ENCODE measurements at regions of chr17 and their contacts with region 1.

Region 1: DNA sequence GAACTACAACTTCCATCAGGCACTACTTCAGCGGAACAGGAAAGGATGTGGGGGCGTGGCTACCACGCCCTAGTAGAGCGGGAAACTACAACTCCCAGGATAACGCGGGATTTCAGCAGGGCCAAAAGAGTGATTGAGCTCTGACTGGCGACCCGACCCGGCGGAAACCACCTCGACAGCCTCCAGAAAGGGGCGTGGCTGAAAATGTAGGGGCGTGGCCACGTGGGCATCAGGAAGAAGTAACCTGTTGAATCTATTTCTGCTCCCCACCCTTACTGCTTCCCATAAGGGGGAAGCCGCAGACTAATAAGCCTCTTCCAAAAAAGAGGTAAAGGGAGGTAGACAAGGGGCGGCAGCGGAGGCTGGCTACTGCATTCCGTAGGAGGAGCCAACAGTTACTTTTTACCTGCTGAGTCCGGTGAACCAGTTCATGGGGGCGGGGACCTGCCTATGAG is at the start of gene TMEM102:
- DNase-seq: peak; percentile 92 to 99 (median 99)
- ATAC-seq: peak; percentile 94
- H3K4me3 ChIP-seq: peak within 1 kb of the TSS; percentile 65
- H3K4me3 Mint-ChIP-seq: peak within 1 kb of the TSS; percentile 86 to 96 (median 94)
- H3K27ac ChIP-seq: peak within 1 kb of the TSS; percentile 83
- H3K27ac Mint-ChIP-seq: peak within 1 kb of the TSS; percentile 89 to 97 (median 95)
- H3K4me1 ChIP-seq: peaks cover 16 to 38% of the 10 kb centered on the region in 2 donors
- H3K4me1 Mint-ChIP-seq: peaks cover 26 to 42% (median 36%) of the 10 kb centered on the region in 7 donors
- H3K27me3 ChIP-seq: peaks cover 0 to 9% of the 10 kb centered on the region in 2 donors
- H3K27me3 Mint-ChIP-seq: peaks cover 11 to 13% (median 12%) of the 10 kb centered on the region in 5 donors
- total RNA-seq, gene TMEM102: 8.2 to 19.1 (median 16.5) TPM

Region 2: GRCh38 chr17:7239091-7240027 is 195.9 kb before region 1 on chr17 and contains the start of gene PHF23:
- CTCF ChIA-PET with region 1: no interaction called
- POLR2A ChIA-PET with region 1: interaction called, 3 read pairs
- intact Hi-C with region 1: loop called (anchors 1 kb)
- DNase-seq: peak; percentile 91 to 98 (median 97)
- ATAC-seq: peak; percentile 78
- H3K4me3 ChIP-seq: peak within 1 kb of the TSS; percentile 76
- H3K4me3 Mint-ChIP-seq: peak within 1 kb of the TSS; percentile 88 to 98 (median 95)
- H3K27ac ChIP-seq: peak within 1 kb of the TSS; percentile 92
- H3K27ac Mint-ChIP-seq: peak within 1 kb of the TSS; percentile 55 to 100 (median 95)
- H3K4me1 ChIP-seq: peaks cover 32 to 44% of the 10 kb centered on the region in 2 donors
- H3K4me1 Mint-ChIP-seq: peaks cover 38 to 67% (median 60%) of the 10 kb centered on the region in 7 donors
- H3K27me3 ChIP-seq: no peaks in the 10 kb centered on the region
- H3K27me3 Mint-ChIP-seq: peaks cover 0 to 7% (median 0%) of the 10 kb centered on the region in 5 donors
- total RNA-seq, gene PHF23: 12.3 to 58.7 (median 55.2) TPM

Region 3: DNA sequence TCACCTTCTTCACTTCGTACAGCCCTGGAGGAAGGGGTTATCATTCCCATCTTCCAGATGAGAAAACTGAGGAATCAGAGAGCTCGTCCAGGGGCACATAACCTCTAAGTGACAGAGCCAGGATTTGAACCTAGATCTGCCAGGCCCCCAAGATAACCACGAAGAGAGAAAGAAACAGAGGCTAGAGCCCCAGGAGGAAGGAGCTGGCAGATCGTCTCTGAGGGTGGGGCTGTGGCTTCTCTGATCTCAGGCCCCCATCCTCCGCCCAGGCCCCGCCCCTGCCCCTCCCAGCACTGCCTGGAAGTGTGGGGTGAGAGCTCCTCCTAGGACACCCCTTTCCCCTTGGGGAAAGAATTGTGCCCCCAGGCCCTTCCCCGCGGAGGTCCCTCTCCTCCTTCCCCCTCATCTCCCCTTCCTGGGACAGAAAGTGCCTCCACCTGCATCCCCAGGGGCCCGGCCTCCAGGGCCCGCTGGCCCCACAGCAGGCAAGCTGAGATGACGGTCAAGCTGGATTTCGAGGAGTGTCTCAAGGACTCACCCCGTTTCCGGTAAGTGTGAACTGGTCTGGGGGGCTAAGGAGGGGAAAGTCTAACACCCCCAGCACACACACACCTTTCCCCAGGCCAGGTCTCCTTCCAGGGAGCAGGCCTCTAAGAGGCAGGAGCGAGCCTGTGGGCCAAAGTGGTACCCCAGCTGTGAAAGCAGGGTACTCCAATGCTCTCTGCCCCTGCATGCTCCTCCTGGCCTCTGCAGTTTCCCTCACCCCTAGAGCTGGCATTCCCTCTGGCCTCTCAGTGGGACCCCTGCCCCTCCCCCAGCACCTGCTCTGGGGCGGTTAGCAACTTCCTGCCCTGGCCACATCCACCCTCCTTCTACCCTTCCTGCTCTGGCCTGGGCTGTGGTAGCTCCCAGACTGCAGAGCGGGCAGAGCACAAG is 98.7 kb before region 1 on chr17 and contains the start of gene ACAP1:
- CTCF ChIA-PET with region 1: interaction called, 16 read pairs
- POLR2A ChIA-PET with region 1: interaction called, 20 read pairs
- intact Hi-C with region 1: loop called in 1 of 2 experiments (anchors 1 kb)
- DNase-seq: peak; percentile 56 to 85 (median 82)
- ATAC-seq: peak; percentile 99
- H3K4me3 ChIP-seq: peak within 1 kb of the TSS; percentile 99
- H3K4me3 Mint-ChIP-seq: peak within 1 kb of the TSS; percentile 89 to 99 (median 94)
- H3K27ac ChIP-seq: peak within 1 kb of the TSS; percentile 81
- H3K27ac Mint-ChIP-seq: peak within 1 kb of the TSS; percentile 89 to 100 (median 95)
- H3K4me1 ChIP-seq: peaks cover 31 to 44% of the 10 kb centered on the region in 2 donors
- H3K4me1 Mint-ChIP-seq: peaks cover 49 to 76% (median 60%) of the 10 kb centered on the region in 7 donors
- H3K27me3 ChIP-seq: no peaks in the 10 kb centered on the region
- H3K27me3 Mint-ChIP-seq: no peaks in the 10 kb centered on the region
- total RNA-seq, gene ACAP1: 482 to 708 (median 599) TPM

Region 4: GRCh38 chr17:7454980-7455379 is 19.7 kb after region 1 on chr17:
- CTCF ChIA-PET with region 1: interaction called, 35 read pairs
- POLR2A ChIA-PET with region 1: interaction called, 79 read pairs
- intact Hi-C with region 1: loop called (anchors 1 kb)
- DNase-seq: no peak
- ATAC-seq: peak; percentile 26
- H3K4me3 ChIP-seq: peak overlapping the region; percentile 92
- H3K4me3 Mint-ChIP-seq: peak overlapping the region; percentile 89 to 96 (median 95)
- H3K27ac ChIP-seq: peak overlapping the region; percentile 77
- H3K27ac Mint-ChIP-seq: peak overlapping the region; percentile 86 to 97 (median 94)
- H3K4me1 ChIP-seq: peaks cover 17 to 20% of the 10 kb centered on the region in 2 donors
- H3K4me1 Mint-ChIP-seq: peaks cover 13 to 44% (median 36%) of the 10 kb centered on the region in 7 donors
- H3K27me3 ChIP-seq: no peaks in the 10 kb centered on the region
- H3K27me3 Mint-ChIP-seq: no peaks in the 10 kb centered on the region

Region 5: GRCh38 chr17:7548585-7549400 is 113.5 kb after region 1 on chr17 and contains the start of gene TNFSF12:
- CTCF ChIA-PET with region 1: interaction called, 5 read pairs
- POLR2A ChIA-PET with region 1: interaction called, 5 read pairs
- intact Hi-C with region 1: loop called in 1 of 2 experiments (anchors 1 kb)
- DNase-seq: peak in 7 of 9 donors; percentile 38 to 69 (median 45)
- ATAC-seq: peak; percentile 60
- H3K4me3 ChIP-seq: peak within 1 kb of the TSS; percentile 91
- H3K4me3 Mint-ChIP-seq: peak within 1 kb of the TSS; percentile 77 to 99 (median 91)
- H3K27ac ChIP-seq: peak within 1 kb of the TSS; percentile 70
- H3K27ac Mint-ChIP-seq: peak within 1 kb of the TSS; percentile 90 to 98 (median 94)
- H3K4me1 ChIP-seq: peaks cover 14 to 35% of the 10 kb centered on the region in 2 donors
- H3K4me1 Mint-ChIP-seq: peaks cover 46 to 60% (median 55%) of the 10 kb centered on the region in 7 donors
- H3K27me3 ChIP-seq: no peaks in the 10 kb centered on the region
- H3K27me3 Mint-ChIP-seq: peaks cover 0 to 2% (median 0%) of the 10 kb centered on the region in 5 donors
- total RNA-seq, gene TNFSF12: 27.3 to 82.4 (median 36.9) TPM

Region 6: DNA sequence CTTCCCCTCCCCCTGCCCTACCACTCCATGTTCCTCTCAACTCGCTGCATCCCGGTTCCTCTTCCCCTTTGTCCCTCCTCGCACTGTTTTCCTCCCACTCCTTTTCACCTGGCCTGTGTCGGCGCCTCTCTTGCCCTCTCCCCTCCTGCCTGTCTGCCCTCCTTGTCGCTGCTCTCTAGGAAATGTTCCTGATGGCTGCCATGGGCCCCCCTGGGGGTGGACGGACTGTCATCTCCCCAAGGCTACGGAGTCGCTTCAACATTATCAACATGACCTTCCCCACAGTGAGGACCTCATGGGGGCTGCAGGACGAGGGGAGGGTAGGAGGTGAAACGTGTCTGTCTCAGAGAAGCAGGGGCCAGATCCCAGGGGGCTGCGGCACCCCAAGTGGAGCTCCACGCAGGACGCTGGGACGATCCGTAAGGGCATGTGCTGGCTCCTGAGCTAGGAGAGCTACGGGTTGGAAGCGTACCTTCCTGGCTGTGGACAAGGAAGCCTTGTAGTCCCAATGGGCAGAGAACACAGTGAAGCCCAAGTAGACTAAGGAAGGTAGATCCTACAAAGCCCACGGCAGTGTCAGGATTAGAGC is 358.9 kb after region 1 on chr17:
- CTCF ChIA-PET with region 1: no interaction called
- POLR2A ChIA-PET with region 1: no interaction called
- intact Hi-C with region 1: no loop called
- DNase-seq: no peak
- ATAC-seq: no peak
- H3K4me3 ChIP-seq: no peak overlapping the region
- H3K4me3 Mint-ChIP-seq: no peak overlapping the region
- H3K27ac ChIP-seq: no peak overlapping the region
- H3K27ac Mint-ChIP-seq: peak overlapping the region in 1 of 9 donors; percentile 21
- H3K4me1 ChIP-seq: no peaks in the 10 kb centered on the region
- H3K4me1 Mint-ChIP-seq: no peaks in the 10 kb centered on the region
- H3K27me3 ChIP-seq: no peaks in the 10 kb centered on the region
- H3K27me3 Mint-ChIP-seq: peaks cover 0 to 3% (median 0%) of the 10 kb centered on the region in 5 donors

Region 7: DNA sequence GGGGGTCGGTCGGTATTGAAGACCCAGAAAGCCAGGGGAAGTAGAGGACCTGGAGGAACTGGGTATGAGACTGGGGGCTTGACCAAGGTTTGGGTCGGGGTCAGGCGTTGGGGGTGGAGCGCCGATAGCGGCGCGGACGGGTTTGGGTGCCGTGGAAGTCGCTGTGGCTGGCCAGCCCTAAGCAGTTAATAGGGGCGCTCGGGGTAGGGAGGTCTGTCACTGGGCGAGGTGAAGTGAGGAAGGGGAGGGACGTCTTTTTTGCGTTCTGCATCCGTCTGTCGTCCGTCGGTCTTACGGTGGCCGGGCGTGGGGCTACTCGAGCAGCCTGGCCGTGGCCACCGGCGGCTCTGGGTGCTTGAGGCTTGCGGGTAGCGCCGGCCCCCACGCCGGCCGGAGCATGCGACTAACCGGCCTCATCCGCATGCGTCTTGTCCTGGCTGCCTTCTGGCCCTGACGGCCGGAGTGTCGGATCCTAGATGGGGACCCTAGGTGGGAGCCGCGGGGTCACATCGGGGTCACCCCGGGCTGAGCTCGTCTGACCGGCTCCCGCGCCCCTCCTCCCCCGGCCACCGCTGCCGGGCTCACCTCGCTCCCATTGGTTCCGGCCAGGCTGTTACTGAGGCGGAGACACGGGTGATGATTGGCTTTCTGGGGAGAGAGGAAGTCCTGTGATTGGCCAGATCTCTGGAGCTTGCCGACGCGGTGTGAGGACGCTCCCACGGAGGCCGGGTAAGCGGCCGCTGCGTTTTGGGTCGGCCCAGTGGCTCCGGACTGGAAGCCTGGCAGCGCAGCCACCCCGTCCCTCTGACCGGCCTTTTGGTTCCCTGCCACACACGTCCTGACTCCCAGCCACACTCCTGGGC is 409.3 kb after region 1 on chr17:
- CTCF ChIA-PET with region 1: no interaction called
- POLR2A ChIA-PET with region 1: no interaction called
- intact Hi-C with region 1: loop called in 1 of 2 experiments (anchors 5 kb)
- DNase-seq: peak; percentile 74 to 87 (median 79)
- ATAC-seq: peak; percentile 42
- H3K4me3 ChIP-seq: peak overlapping the region; percentile 84
- H3K4me3 Mint-ChIP-seq: peak overlapping the region; percentile 85 to 99 (median 94)
- H3K27ac ChIP-seq: peak overlapping the region; percentile 100
- H3K27ac Mint-ChIP-seq: peak overlapping the region; percentile 90 to 100 (median 99)
- H3K4me1 ChIP-seq: peaks cover 11 to 26% of the 10 kb centered on the region in 2 donors
- H3K4me1 Mint-ChIP-seq: peaks cover 19 to 41% (median 29%) of the 10 kb centered on the region in 7 donors
- H3K27me3 ChIP-seq: no peaks in the 10 kb centered on the region
- H3K27me3 Mint-ChIP-seq: peaks cover 0 to 2% (median 0%) of the 10 kb centered on the region in 5 donors

Measured in naive thymus-derived CD4-positive, alpha-beta T cell (primary cell).